MCF 10A (cell line): ENCODE measurements at regions of chr18 and their contacts with region 1.

Region 1: DNA sequence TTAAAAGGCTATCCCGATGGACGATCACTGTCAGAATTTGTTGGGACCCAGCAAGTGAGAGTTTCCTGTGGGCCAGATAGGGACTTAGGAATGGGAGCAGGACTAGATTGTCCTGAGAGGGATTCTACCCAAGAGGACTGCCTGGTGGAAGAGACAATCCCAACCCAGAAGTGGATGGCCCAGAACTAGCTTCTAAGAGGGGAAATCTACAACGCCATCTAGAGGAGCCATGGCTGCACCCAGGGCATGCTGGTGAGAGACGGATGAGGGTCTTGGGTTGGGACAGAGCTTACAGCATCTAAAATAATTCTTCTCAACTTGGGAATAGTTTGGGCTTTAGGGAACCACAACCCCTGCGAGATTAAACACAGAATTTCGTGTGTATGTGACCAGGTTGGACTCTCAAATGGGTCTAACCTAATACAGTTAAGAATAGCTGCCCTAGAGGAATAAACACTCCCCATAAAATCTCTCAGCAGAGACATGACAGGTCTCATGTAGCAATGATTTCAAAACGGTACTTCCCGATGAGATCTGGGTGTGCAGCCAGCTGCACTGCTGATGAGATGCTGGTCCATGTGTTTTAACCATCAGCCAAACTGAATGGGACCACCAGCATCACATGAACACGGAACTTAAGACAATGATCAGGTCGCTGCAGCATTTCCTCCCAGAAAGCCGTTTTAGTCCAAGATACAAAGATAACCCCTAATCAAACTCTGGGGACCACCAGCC is 50.8 kb downstream of the CCBE1 start:
- DNase-seq: no peak
- H3K4me3 Mint-ChIP-seq: no peak overlapping the region
- H3K27ac Mint-ChIP-seq: no peak overlapping the region
- H3K4me1 Mint-ChIP-seq: peaks cover 5% of the 10 kb centered on the region
- H3K27me3 Mint-ChIP-seq: no peaks in the 10 kb centered on the region
- CTCF ChIP-seq: no peak

Region 2: GRCh38 chr18:59672235-59672711 is 25.9 kb after region 1 on chr18:
- CTCF ChIA-PET with region 1: no interaction called
- POLR2A ChIA-PET with region 1: no interaction called
- intact Hi-C with region 1: loop called (anchors 1 kb)
- DNase-seq: peak; percentile 52
- H3K4me3 Mint-ChIP-seq: no peak overlapping the region
- H3K27ac Mint-ChIP-seq: no peak overlapping the region
- H3K4me1 Mint-ChIP-seq: peaks cover 5% of the 10 kb centered on the region
- H3K27me3 Mint-ChIP-seq: no peaks in the 10 kb centered on the region
- CTCF ChIP-seq: no peak

Region 3: DNA sequence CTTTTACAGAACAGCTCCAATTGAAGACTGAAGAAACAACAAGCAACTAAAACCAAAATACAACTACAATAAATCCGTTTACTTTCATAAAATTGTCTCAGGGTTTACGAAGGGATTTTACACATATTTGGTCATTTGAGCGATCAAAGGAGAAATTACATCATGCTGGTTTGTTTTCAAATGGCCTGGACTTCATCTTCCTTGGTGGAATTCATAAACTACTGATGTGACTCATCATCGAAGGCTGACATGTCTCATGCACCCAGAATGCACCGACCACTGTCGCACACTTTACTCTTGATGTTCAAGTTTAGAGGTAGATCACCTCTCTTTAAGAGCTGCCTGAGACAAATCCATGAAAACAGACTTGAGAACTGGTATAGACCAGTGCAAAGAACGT is 227.8 kb after region 1 on chr18:
- CTCF ChIA-PET with region 1: no interaction called
- POLR2A ChIA-PET with region 1: no interaction called
- intact Hi-C with region 1: no loop called
- DNase-seq: peak; percentile 62
- H3K4me3 Mint-ChIP-seq: no peak overlapping the region
- H3K27ac Mint-ChIP-seq: peak overlapping the region; percentile 46
- H3K4me1 Mint-ChIP-seq: peaks cover 15% of the 10 kb centered on the region
- H3K27me3 Mint-ChIP-seq: no peaks in the 10 kb centered on the region
- CTCF ChIP-seq: no peak